ENCODE measurements at regions of chr17 and their contacts with region 1.

Region 1: GRCh38 chr17:48724251-48725003 is 1.4 kb downstream of the PRAC2 start:
- DNase-seq: no peak
- H3K4me3 ChIP-seq: no peak overlapping the region
- H3K27me3 ChIP-seq: peaks cover 69% of the 10 kb centered on the region
- CTCF ChIP-seq: peak; percentile 79

Region 2: GRCh38 chr17:48593840-48594537 is 130.4 kb before region 1 on chr17:
- CTCF ChIA-PET with region 1: no interaction called
- POLR2A ChIA-PET with region 1: no interaction called
- DNase-seq: no peak
- H3K4me3 ChIP-seq: no peak overlapping the region
- H3K27me3 ChIP-seq: peaks cover 86% of the 10 kb centered on the region
- CTCF ChIP-seq: peak; percentile 76

Region 3: GRCh38 chr17:48671697-48672171 is 52.7 kb before region 1 on chr17:
- CTCF ChIA-PET with region 1: interaction called, 13 read pairs
- POLR2A ChIA-PET with region 1: no interaction called
- DNase-seq: peak; percentile 13
- H3K4me3 ChIP-seq: peak overlapping the region; percentile 28
- H3K27me3 ChIP-seq: peaks cover 7% of the 10 kb centered on the region; the same call in 1 of the 2 replicates
- CTCF ChIP-seq: peak; percentile 92

Region 4: DNA sequence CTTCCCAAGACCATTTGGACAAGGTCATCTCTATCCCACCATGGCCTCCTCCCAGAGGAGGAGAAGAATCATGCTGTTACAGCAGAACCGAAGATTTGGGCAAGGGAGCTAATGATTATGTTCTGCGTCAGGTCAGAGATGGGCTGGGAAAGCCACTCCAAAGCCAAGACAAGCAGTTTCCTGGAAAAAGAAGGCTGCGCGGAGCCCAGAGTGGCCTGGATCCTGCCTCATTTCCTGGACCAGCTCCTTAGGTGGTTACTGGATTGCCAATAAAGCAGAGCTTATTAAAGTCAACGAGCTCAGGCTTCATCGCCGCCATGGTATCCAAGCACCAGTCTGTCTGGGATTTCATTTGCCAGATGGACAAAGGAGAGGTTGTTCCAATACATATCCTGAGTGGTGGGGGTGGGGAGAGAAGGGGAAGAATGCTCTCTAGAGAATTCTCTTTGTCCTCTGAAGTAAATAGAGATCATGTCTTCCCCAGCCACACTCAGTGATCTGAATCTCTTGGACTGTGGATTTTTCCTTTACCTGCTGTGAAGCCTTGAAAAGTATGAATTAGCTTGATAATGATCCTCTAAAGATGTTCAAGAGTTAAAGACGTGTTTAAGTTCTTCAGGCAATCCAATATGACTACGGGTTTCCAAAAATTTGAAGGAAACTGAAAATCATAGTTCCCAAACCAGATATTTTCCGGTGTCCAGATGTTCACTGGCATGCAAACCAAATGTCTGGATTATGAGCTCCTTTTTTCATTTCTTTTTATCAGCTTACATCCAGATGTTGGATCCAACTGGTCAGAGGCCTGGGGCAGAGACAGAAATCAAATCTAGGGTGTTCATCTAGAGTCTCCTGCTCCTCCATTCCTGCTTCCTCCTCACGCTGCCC is 19.8 kb before region 1 on chr17:
- CTCF ChIA-PET with region 1: interaction called, 22 read pairs
- POLR2A ChIA-PET with region 1: no interaction called
- DNase-seq: no peak
- H3K4me3 ChIP-seq: no peak overlapping the region
- H3K27me3 ChIP-seq: peaks cover 14% of the 10 kb centered on the region
- CTCF ChIP-seq: no peak

Region 5: DNA sequence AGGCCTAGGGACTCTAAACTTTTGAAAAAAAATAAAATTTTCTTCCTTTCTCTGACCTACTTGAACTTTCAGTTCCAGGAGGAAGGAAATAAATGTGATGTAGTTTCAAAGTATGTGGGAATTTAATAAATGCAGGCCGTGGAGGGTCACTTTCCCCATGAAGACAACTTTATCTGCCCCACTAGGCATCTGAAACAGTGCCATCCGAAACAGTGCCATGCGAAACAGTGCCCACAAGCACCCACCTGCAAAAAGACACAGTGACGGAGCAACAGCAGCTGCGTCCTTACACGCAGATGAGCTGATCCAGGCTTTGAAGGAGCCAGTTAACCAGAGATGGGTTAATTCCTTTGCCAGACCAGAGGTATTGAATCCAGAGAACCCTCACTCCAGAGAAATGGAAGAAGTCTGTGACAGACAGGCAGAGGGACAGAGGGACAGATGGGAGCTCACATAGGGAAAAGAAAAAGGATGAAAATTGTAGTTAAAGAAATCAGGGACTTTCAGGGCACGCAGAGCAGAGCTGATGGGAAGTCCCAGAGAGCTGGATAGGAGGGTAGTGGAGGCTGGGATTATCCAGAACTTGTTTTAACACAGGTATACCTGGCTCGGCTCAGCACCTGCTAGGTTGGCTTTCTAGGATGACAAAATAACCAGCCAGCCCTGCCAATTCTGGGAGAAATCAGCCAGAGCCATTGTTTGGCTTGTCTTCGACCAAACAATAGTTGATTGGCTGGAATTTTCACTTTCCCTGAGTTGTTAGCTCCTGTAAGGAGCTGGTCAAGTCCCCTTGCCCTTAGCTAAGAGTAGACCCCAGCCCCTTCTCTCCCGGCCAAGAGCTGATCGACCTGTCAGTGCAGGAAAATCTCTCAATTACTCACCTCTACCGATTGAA is 21.2 kb after region 1 on chr17:
- CTCF ChIA-PET with region 1: interaction called, 14 read pairs
- POLR2A ChIA-PET with region 1: no interaction called
- DNase-seq: no peak
- H3K4me3 ChIP-seq: no peak overlapping the region
- H3K27me3 ChIP-seq: peaks cover 59% of the 10 kb centered on the region
- CTCF ChIP-seq: no peak

Region 6: DNA sequence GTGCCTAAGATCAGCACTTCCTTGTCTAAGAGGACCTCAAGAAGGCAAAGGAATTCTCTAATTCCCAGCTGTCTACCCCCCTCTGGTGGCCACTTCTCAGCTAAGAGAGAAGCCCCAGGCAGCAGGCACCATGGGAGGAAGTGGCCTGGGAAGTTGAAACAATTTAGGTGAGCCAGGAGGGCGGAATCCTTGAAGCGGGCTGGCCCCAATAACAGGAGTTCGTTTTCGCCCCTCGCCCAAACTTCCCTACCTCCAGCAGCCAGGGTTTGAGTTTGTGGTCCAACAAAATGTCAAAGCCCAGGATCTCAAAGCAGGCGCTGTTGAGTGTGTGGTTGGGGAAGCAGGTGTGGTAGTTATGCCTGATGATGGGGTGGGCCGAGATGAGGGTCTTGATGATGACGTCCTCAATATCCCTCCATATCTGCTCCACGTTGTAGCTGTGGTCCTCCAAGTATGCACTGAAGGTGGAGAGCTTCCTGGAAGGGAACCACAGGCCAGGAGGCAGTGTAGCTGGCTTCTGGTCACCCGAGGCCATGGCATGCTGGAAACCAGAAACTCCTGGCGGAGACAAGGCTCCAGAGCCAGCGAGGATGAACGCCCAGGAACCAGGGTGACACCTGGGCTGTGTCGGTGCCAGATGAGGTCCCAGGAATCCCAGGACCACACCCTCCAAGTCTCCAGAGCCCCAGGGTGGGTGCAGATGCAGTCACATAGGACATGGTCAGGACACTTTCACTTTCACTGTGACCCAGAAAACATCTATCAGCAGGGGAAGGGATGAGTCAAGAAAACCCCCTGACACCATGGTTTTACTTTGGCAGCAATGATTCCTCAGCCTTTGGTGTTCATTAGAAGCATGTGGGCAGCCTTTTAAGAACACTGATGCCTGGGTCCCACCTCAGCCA is 67.0 kb after region 1 on chr17:
- CTCF ChIA-PET with region 1: interaction called, 152 read pairs
- POLR2A ChIA-PET with region 1: no interaction called
- DNase-seq: peak; percentile 35
- H3K4me3 ChIP-seq: no peak overlapping the region
- H3K27me3 ChIP-seq: peaks cover 13% of the 10 kb centered on the region
- CTCF ChIP-seq: peak; percentile 89

Region 7: DNA sequence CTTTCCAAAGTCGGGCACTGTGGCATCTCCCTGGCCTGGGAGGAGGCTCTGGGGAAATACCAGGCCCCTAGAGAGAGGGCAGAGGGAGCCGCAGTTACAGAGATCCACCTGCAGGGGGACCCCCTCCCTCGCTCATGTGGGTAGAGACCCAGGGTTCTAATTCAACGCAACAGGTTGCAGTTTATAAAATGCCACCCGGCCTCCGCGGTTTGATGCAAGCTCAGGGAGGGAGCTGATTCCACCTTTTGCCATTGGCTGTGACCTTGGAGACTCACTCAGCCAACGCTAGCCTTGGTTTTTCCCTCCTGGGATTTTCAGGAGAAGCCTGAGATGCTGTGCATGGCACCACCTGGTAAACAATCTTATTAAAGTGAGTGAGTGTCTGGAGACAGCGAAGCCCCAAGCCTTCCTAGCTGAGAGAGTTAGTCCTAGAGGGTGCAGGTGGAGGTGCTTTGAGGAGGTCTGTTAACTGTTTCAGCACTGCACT is 80.5 kb after region 1 on chr17:
- CTCF ChIA-PET with region 1: interaction called, 20 read pairs
- POLR2A ChIA-PET with region 1: no interaction called
- DNase-seq: no peak
- H3K4me3 ChIP-seq: no peak overlapping the region
- H3K27me3 ChIP-seq: peaks cover under 1% of the 10 kb centered on the region
- CTCF ChIP-seq: peak; percentile 97

Region 8: DNA sequence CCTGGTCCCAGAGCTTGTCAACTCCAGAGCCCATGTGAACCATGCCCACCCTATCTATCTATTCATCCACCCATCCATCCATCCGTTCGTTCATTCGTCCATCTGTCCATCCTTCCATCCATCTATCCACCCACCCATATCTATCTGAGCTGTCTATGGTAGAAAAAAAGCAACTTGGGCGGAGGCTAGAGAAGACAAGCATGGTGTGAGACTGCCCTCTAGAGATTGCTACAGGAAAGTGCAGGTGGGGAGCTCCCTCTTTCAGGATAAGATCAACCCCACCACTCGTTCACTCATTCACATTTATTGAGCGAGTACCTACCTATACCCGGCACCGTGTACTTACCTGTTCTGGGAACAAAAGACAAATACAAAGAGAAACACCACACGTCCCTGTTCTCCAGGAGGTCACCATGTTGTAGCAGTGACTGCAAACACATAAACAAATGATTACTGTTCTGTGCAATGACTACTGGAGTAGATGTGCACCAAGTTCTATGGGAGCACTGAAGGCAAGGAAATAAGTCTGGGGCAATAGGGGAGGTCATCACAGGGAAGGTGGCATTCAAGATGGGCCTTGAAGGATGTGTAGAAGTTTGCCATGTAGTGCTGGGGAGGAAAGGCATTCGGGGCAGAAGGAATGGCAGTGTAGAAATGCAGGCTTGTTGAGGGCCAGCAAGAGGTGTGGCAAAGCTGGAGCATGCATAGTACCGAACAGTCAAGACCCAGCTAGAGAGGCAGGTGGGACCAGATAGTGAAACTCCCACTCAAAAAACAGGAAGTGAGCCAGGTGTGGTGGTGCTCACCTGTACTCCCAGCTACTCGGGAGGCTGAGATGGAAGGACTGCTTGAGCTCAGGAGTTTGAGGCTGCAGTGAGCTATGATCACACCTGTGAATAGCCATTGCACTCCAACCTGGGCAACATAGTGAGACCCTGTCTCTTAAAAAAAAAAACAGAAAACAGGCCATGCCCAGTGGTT is 154.8 kb after region 1 on chr17:
- CTCF ChIA-PET with region 1: interaction called, 128 read pairs
- POLR2A ChIA-PET with region 1: no interaction called
- DNase-seq: no peak
- H3K4me3 ChIP-seq: no peak overlapping the region
- H3K27me3 ChIP-seq: no peaks in the 10 kb centered on the region
- CTCF ChIP-seq: peak; percentile 95